ENCODE measurements at regions of chr17 and their contacts with region 1.

Region 1: DNA sequence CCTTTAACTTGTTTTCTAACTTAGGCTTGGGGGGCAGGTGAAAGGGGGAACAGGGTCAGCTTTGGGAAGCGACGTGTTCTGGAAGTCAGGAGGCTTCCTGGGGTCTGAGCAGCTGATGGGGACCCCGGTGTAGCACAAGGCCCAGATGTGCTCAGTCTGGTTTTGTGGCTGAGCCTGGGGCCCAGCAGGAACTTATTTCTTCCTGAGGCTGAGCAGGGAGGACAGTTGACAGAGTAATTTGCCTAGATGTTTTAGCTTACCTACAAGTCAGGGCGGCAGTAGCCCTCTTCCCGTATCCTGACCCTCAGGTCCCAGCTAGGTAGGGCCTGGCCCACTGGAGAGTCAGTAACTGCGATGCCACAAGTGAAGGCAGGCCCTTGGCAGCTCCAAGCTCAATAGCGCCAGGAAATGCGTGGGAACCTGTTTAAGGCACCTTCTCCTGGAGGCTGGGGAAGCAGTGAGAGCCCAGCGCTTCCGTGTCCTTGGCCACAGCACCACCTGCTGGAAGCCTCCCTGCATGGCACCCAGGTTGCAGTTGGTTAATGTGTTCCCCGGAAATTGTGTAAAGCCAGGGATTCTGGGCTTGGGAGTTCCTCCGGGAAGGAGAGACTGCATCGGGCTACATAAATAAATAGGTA is 5.2 kb downstream of the CCR7 start:
- H3K4me3 ChIP-seq: no peak overlapping the region
- H3K27ac ChIP-seq: no peak overlapping the region
- H3K4me1 ChIP-seq: no peaks in the 10 kb centered on the region
- CTCF ChIP-seq: peak; percentile 97

Region 2: GRCh38 chr17:40287494-40288369 is 272.3 kb before region 1 on chr17 and contains the start of gene CDC6:
- CTCF ChIA-PET with region 1: no interaction called
- POLR2A ChIA-PET with region 1: interaction called, 13 read pairs
- H3K4me3 ChIP-seq: peak within 1 kb of the TSS; percentile 96
- H3K27ac ChIP-seq: peak within 1 kb of the TSS; percentile 95
- H3K4me1 ChIP-seq: peaks cover 3% of the 10 kb centered on the region
- CTCF ChIP-seq: 0 out of 2 replicates have a peak, but pooled peaks have one; percentile 9

Region 3: DNA sequence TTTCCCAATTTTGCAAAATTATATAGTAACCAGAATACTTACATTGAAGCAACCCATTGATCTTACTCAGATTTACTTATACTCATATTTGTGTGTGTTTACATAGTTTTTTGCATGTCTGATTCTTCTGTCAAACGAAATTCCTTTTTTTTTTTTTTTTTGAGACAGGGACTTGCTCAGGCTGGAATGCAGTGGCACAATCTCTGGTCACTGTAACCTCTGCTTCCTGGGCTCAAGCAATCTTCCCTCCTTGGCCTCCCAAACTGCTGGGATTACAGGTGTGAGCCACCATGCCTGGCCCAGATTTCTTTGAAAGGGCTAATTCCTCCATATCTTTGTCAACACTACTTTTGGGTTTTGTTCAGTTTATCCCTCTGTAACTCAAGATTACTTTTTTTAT is 172.4 kb before region 1 on chr17:
- CTCF ChIA-PET with region 1: interaction called, 11 read pairs
- POLR2A ChIA-PET with region 1: no interaction called
- H3K4me3 ChIP-seq: no peak overlapping the region
- H3K27ac ChIP-seq: no peak overlapping the region
- H3K4me1 ChIP-seq: no peaks in the 10 kb centered on the region
- CTCF ChIP-seq: no peak

Region 4: DNA sequence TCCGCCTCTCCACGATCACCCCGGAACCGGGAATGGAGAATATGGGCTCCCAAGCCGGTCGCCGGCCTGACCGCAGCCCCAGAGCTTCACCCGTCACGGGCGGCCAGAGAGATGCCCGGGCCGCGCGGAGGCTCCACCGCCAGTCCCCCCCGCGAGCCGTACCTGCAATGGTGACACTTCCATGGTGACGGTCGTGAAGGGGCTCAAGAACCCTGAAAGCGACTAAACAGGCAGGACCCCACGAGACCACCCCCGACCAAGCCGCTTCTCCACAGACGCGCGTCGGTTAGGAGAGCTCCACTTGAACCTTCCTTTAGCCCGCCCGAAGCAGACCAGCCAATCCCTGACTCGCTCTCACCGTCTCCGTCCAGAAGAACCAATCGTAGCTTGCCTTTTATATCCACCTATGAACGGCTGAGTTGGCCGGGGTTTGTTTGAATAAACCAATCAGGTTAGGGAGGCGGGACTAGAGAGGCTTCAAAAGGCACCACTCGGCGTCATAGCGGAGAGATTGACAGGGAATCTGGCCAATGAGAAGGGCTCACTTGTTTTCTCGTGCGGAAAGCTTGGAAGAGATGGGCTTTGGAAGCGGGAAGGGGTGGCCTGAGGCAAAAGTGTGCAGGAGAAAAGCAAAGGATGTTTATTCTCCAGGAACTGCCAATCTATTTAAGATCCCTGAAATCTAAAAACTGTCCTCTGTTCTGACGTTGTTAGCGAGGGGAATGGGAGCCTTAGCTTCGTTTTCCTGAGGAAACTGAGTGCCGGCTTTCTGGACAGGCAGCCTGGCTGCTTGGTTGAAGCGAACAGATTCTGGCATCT is 142.3 kb before region 1 on chr17 and contains the start of gene TOP2A:
- CTCF ChIA-PET with region 1: interaction called, 32 read pairs
- POLR2A ChIA-PET with region 1: interaction called, 8 read pairs
- H3K4me3 ChIP-seq: peak within 1 kb of the TSS; percentile 96
- H3K27ac ChIP-seq: peak within 1 kb of the TSS; percentile 94
- H3K4me1 ChIP-seq: peaks cover 3% of the 10 kb centered on the region
- CTCF ChIP-seq: 0 out of 2 replicates have a peak, but pooled peaks have one; percentile 5

Region 5: DNA sequence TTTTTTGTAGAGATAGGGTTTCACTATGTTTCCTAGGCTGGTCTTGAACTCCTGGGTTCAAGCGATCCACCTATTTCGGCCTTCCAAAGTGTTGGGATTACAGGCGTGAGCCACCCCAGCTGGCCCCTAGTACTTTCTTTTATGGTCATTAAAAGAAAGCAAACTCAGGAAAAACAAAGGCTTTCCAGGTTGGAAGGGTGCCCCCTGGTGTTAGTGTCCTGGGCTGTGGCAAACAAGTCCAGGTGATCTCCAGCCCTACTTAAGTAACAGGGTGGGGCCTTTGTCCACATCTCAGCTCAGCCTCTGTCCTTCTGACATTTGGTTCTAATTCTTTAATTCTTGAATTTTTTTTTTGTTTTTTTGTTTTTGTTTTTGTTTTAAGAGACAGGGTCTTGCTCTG is 109.9 kb before region 1 on chr17:
- CTCF ChIA-PET with region 1: interaction called, 19 read pairs
- POLR2A ChIA-PET with region 1: no interaction called
- H3K4me3 ChIP-seq: no peak overlapping the region
- H3K27ac ChIP-seq: no peak overlapping the region
- H3K4me1 ChIP-seq: no peaks in the 10 kb centered on the region
- CTCF ChIP-seq: peak; percentile 60

Region 6: DNA sequence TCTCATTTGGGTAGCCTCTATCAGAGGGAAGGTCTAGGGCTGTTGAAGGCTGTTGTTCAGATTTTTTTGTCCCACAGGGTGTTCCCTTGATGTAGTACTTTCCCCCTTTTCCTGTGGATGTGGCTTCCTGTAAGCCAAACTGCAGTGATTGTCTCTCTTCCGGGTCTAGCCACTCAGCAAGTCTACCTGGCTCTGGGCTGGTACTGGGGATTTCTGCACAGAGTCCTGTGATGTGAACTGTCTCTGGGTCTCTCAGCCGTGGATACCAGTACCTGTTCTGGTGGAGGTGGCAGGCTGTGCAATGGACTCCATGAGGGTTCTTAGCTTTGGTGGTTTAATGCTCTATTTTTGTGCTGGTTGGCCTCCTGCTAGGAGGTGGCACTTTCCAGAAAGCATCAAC is 28.5 kb after region 1 on chr17:
- CTCF ChIA-PET with region 1: interaction called, 10 read pairs
- POLR2A ChIA-PET with region 1: no interaction called
- H3K4me3 ChIP-seq: no peak overlapping the region
- H3K27ac ChIP-seq: no peak overlapping the region
- H3K4me1 ChIP-seq: no peaks in the 10 kb centered on the region
- CTCF ChIP-seq: no peak